PC-9 (cell line): ENCODE measurements at regions of chr1 and their contacts with region 1.

Region 1: GRCh38 chr1:62687903-62688686 is at the start of gene DOCK7:
- DNase-seq: peak; percentile 43 to 71
- H3K4me3 ChIP-seq: peak within 1 kb of the TSS; percentile 75
- H3K27ac ChIP-seq: peak within 1 kb of the TSS; percentile 65
- H3K4me1 ChIP-seq: peaks cover 56% of the 10 kb centered on the region
- H3K27me3 ChIP-seq: no peaks in the 10 kb centered on the region
- CTCF ChIP-seq: no peak
- total RNA-seq, gene DOCK7: 34.0 and 34.2 TPM in 2 replicates

Region 2: GRCh38 chr1:62436466-62437256 is 251.4 kb before region 1 on chr1 and contains the start of gene USP1:
- CTCF ChIA-PET with region 1: no interaction called
- POLR2A ChIA-PET with region 1: no interaction called
- intact Hi-C with region 1: loop called (anchors 2 kb)
- DNase-seq: peak; percentile 99
- H3K4me3 ChIP-seq: peak within 1 kb of the TSS; percentile 100
- H3K27ac ChIP-seq: peak within 1 kb of the TSS; percentile 95
- H3K4me1 ChIP-seq: peaks cover 23% of the 10 kb centered on the region
- H3K27me3 ChIP-seq: no peaks in the 10 kb centered on the region
- CTCF ChIP-seq: no peak
- total RNA-seq, gene USP1: 42.1 and 50.3 TPM in 2 replicates